Mammary epithelial cell (primary cell): ENCODE measurements at regions of chr18 and their contacts with region 1.

Region 1: DNA sequence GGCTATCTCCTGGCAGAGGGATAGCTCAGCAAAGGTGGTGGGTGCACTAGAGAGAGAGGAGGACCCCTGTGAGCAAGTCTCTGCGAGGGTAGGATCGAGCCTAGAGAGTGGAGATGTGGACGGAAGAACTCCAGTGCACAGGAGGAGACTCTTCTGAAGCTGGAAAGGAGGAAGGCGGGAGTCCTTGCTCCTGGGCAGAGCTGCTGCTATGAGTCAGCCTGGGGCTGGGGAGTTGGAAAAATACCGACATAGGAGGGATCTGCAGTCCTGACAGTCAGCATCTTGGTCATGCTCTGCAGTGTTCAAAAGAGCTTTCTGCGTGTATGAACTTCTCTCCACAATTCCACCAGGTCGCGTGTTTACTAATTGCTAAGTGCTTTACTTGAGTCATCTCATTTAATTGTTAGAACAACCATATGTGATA is 233.8 kb downstream of the LDLRAD4 start:
- DNase-seq: no peak
- H3K4me3 ChIP-seq: no peak overlapping the region
- H3K27ac ChIP-seq: no peak overlapping the region
- H3K4me1 ChIP-seq: no peaks in the 10 kb centered on the region
- H3K27me3 ChIP-seq: no peaks in the 10 kb centered on the region
- CTCF ChIP-seq: no peak

Region 2: GRCh38 chr18:13406049-13406615 is 46.3 kb before region 1 on chr18:
- CTCF ChIA-PET with region 1: no interaction called
- dilution Hi-C with region 1: loop called (anchors 5 kb)
- in situ Hi-C with region 1: no loop called
- intact Hi-C with region 1: no loop called
- DNase-seq: no peak
- H3K4me3 ChIP-seq: no peak overlapping the region
- H3K27ac ChIP-seq: no peak overlapping the region
- H3K4me1 ChIP-seq: no peaks in the 10 kb centered on the region
- H3K27me3 ChIP-seq: peaks cover 2% of the 10 kb centered on the region
- CTCF ChIP-seq: no peak

Region 3: DNA sequence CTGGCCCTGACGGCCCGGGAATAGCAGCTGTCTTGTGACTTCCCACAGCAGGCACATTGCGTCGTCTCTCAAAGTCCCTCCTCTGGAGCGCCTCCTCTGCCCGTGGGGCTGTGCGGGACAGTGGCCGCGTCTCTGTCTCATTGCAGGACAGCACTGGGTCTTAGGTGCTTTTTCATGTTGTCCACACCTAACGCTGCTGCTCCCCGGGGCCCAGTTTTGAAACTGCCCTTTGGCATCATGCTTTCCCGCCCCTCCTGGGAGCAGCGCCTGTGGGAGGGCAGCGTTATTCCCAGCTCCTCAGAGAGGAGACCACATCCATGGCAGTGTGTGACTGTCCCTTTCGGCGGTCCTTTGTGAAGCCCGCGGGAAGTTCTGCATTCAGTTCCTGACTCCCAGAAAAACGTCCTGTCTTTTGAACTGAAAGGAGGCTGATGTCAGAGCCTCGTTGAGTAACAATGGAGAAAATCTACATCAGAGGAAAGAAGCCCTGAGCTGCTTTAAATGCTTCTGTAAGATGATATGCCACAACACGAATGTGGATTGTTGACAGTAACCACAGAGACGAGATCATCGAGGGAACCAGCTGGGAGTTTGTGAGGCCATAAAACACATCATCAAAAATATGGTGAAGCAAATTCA is 47.9 kb after region 1 on chr18:
- CTCF ChIA-PET with region 1: no interaction called
- dilution Hi-C with region 1: loop called (anchors 5 kb)
- in situ Hi-C with region 1: no loop called
- intact Hi-C with region 1: no loop called
- DNase-seq: peak; percentile 66
- H3K4me3 ChIP-seq: no peak overlapping the region
- H3K27ac ChIP-seq: no peak overlapping the region
- H3K4me1 ChIP-seq: no peaks in the 10 kb centered on the region
- H3K27me3 ChIP-seq: peaks cover 5% of the 10 kb centered on the region
- CTCF ChIP-seq: no peak